ENCODE measurements at regions of chr11 and their contacts with region 1.

Region 1: DNA sequence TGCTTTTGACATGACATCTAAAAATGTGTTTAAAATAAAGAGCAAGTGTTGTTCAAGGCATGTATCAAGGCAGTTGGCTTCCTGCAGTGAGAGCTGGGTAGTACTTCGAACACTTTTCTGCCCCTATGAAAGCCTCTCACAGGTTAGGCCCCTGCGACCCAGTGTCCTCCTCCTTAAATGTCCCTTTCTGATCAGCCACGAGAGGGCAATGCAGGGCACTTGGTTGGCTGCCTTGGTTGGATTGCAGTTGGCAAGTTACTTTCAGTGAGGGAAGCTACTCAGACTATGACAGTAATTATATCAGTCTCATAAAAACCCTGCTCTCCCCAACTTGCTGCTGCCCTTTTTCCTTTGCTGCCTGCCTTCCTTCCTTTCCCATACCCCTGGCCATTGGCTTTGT is 743.8 kb downstream of the NTM start:
- DNase-seq: peak in 1 of 2 donors; percentile 18
- ATAC-seq: peak; percentile 45 to 47
- H3K4me3 ChIP-seq: no peak overlapping the region
- H3K27ac ChIP-seq: no peak overlapping the region
- H3K4me1 ChIP-seq: no peaks in the 10 kb centered on the region
- H3K27me3 ChIP-seq: no peaks in the 10 kb centered on the region
- CTCF ChIP-seq: peak in 2 of 5 experiments; percentile 33 to 41
- POLR2A ChIP-seq: no peak

Region 2: DNA sequence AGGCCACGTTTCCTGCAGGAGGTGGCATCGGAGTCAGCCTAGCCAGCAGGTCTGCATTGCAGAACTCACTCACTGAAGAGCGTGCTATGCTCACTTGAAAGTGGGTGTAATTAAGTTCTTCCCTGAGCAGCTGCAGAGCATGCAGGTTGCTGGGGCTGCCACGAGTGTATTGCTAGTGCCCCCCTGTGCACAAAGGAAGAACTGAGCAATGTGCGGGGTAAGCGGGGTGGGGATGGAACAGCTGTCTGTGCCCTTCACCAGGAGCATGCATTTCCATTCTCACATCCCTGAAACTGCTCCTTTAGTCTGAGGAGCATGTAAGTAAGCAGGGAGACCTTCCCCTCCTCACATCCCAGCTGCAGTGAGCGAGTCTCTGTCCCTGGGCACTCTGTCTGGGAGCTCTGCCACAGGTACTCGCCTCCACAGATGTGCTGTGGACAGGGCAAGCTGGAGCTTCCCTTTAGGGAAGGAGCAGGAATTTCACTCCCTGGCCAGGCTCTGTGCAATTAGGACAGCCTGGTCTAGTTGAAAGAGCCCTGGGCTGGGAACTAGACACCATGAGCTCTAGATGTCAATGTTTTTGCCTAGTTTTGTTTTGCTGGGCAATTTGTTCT is 288.0 kb after region 1 on chr11:
- in situ Hi-C with region 1: no loop called
- intact Hi-C with region 1: loop called (anchors 5 kb)
- DNase-seq: no peak
- ATAC-seq: peak in 1 of 2 donors; percentile 63
- H3K4me3 ChIP-seq: no peak overlapping the region
- H3K27ac ChIP-seq: no peak overlapping the region
- H3K4me1 ChIP-seq: no peaks in the 10 kb centered on the region
- H3K27me3 ChIP-seq: no peaks in the 10 kb centered on the region
- CTCF ChIP-seq: peak in 3 of 5 experiments; percentile 13 to 48 (median 32)
- POLR2A ChIP-seq: no peak

Measured in gastrocnemius medialis (tissue), 4 donors.